ENCODE measurements at regions of chr5 and their contacts with region 1.

Region 1: GRCh38 chr5:1004461-1005248 is 3.9 kb upstream of the NKD2 start:
- DNase-seq: peak; percentile 64 to 70 (median 65)
- H3K4me3 ChIP-seq: peak overlapping the region; percentile 19 to 64 (median 44)
- H3K27ac ChIP-seq: no peak overlapping the region
- H3K4me1 ChIP-seq: peaks cover 0 to 33% (median 21%) of the 10 kb centered on the region in 4 experiments
- H3K27me3 ChIP-seq: peaks cover 0 to 72% (median 36%) of the 10 kb centered on the region in 5 experiments

Region 2: DNA sequence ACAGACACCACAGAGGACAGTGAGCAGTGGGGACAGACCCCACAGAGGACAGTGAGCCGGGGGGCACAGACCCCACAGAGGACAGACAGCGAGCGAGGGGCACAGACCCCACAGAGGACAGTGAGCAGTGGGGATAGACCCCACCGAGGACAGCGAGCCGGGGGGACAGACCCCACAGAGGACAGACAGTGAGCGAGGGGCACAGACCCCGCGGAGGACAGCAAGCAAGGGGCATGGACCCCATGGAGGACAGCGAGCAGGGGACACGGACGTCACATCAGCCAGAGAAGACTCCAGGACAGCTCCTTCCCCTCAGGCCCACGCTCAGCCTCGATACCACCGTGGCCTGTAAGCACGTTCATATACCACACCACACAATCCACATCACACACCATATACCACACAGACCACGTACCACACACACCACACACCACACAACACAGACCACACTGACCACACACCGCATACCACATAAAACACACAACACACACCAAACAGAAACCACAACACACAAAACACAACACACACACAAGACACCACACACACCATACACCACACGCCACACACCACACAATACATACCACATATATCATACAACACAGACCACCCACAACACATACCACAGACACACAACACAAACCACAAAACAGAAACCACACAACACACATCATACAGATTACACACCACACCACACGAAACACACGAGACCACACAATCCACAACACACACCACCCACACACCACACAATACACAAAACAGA is 148.7 kb before region 1 on chr5:
- CTCF ChIA-PET with region 1: no interaction called
- POLR2A ChIA-PET with region 1: no interaction called
- DNase-seq: peak; percentile 13 to 50 (median 33)
- H3K4me3 ChIP-seq: no peak overlapping the region
- H3K27ac ChIP-seq: no peak overlapping the region
- H3K4me1 ChIP-seq: no peaks in the 10 kb centered on the region
- H3K27me3 ChIP-seq: peaks cover 0 to 15% (median 2%) of the 10 kb centered on the region in 5 experiments

Region 3: DNA sequence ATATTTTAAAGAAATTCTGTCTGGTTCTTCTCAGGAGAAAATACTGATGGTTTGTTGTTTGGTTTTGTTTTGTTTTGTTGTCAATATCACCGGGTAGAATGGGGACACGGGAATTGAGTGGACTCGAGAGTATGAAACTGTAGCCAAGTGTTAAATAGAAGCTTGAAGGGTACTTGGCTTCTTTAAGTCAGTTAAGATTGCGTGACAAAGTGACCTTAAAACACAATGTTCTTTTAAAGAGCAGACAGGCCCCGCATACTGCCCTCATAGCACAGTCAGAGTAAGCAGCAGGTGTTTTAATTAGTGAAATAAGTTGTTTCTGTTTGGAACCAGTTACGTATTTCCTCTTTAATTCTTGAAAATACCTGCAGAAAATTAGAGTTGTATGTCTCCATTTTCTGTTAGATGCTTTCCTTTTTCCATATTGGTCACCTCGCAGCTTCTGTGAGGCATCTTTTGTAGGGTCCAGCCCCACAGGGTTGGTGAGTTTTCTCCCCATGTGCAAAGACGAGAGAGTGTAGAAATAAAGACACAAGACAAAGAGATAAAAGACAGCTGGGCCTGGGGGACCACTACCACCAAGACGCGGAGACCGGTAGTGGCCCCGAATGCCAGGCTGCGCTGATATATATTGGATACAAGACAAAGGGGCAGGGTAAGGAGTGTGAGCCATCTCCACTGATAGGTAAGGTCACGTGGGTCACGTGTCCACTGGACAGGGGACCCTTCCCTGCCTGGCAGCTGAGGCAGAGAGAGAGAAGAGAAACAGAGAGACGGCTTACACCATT is 102.3 kb before region 1 on chr5:
- CTCF ChIA-PET with region 1: no interaction called
- POLR2A ChIA-PET with region 1: no interaction called
- DNase-seq: no peak
- H3K4me3 ChIP-seq: no peak overlapping the region
- H3K27ac ChIP-seq: no peak overlapping the region
- H3K4me1 ChIP-seq: no peaks in the 10 kb centered on the region
- H3K27me3 ChIP-seq: no peaks in the 10 kb centered on the region

Region 4: DNA sequence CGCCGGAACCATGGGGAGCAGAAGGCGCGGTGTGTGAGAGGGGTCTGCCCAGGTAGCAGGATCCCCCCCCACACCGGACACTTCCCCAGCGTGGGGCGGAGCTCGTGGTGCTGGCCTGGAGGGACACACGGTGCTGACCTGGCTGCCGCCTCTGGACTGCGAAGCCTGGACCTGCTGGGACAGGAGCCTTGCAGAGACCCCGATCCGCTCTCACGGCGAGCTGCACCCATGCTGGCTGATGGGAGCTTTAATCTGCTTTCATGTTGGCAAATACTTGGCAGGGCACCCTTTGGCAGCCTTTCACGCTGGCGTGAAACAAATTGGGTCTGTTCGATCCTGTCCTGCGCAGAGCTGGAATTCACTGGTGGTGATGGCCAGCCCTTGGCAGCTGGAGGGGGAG is 11.4 kb after region 1 on chr5:
- CTCF ChIA-PET with region 1: interaction called, 11 read pairs
- POLR2A ChIA-PET with region 1: no interaction called
- DNase-seq: no peak
- H3K4me3 ChIP-seq: no peak overlapping the region
- H3K27ac ChIP-seq: no peak overlapping the region
- H3K4me1 ChIP-seq: no peaks in the 10 kb centered on the region
- H3K27me3 ChIP-seq: peaks cover 0 to 24% (median 0%) of the 10 kb centered on the region in 5 experiments

Region 5: DNA sequence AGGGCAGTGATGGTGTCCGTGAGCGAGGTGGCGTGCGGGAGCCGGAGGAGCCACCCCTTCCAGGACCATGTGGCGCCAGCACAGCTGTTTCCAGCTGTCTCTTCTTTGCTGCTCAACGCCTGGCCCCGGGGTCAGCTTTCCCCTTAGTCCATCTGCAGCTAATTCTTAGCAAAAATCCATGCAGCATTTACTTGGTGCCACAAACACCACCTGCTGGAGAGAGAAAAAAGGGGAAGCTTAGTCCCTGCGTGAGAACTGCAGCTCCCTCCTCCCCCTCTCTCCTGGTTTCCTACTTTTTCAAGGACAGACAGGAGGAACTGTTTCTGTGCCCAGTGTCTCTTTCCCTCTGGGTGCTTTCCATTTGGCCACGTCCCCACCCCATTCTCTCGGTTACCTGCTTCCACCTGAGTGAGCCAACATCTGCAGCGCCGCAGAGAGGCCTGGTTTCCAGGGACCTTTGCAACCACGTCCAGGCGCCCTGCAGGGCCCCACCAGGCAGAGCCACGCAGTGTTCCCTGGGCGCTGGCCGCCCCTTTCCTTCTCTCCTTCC is 200.1 kb after region 1 on chr5:
- CTCF ChIA-PET with region 1: no interaction called
- POLR2A ChIA-PET with region 1: no interaction called
- DNase-seq: peak; percentile 10 to 56 (median 31)
- H3K4me3 ChIP-seq: no peak overlapping the region
- H3K27ac ChIP-seq: no peak overlapping the region
- H3K4me1 ChIP-seq: peaks cover 0 to 2% (median 0%) of the 10 kb centered on the region in 4 experiments
- H3K27me3 ChIP-seq: peaks cover 0 to 15% (median 3%) of the 10 kb centered on the region in 5 experiments

Region 6: DNA sequence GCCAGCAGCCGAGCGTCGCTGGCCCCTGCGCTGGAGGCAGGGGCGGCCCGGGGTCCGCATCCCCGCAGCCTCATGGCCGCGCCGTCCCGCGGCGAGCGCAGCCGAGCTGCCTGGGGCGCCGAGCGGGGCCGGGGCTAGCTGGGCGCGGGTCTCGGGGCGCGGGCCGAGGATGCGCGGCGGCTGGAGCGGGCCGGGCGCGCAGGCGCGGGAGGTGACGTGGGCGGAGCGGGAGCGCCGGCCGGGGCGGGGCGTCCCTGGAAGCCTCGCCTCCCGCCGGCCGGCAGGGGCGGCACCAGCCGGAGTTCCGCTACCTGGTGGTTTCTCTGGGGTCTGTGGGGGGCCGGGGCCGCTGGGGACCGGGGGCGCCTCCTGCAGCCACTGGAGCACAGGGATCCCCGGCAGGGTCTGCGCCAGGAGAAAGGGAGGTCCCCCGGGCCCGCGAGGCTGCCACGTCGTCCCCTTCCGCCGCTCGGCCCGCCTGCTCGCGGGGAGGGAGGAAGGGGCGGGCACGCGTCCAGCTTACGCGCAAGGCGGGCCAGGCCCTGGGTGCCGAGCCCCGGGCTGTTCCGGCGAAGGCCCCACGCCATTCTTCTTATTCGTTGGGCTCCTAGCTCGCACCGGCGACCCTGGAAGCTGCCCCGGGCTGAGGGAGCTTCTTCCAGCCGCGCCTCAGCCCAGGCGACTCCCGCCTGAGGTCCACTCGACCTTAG is 519.3 kb after region 1 on chr5 and contains the start of gene LPCAT1:
- CTCF ChIA-PET with region 1: no interaction called
- POLR2A ChIA-PET with region 1: no interaction called
- DNase-seq: peak; percentile 54 to 75 (median 69)
- H3K4me3 ChIP-seq: peak within 1 kb of the TSS; percentile 57 to 84 (median 75)
- H3K27ac ChIP-seq: peak within 1 kb of the TSS in 1 of 2 experiments; percentile 70
- H3K4me1 ChIP-seq: peaks cover 0 to 20% (median 18%) of the 10 kb centered on the region in 4 experiments
- H3K27me3 ChIP-seq: no peaks in the 10 kb centered on the region

Measured in common myeloid progenitor, CD34-positive (primary cell).